Sigmoid colon (tissue), 7 donors: ENCODE measurements at regions of chr5 and their contacts with region 1.

Region 1: GRCh38 chr5:73298772-73299630 is 126.0 kb downstream of the TMEM174 start:
- DNase-seq: no peak
- H3K4me3 ChIP-seq: peak overlapping the region in 2 of 4 donors; percentile 1 to 9
- H3K27ac ChIP-seq: no peak overlapping the region
- H3K4me1 ChIP-seq: peaks cover 0 to 41% (median 33%) of the 10 kb centered on the region in 4 donors
- H3K27me3 ChIP-seq: peaks cover 67 to 92% (median 73%) of the 10 kb centered on the region in 3 donors
- CTCF ChIP-seq: no peak
- EP300 ChIP-seq: no peak
- POLR2A ChIP-seq: no peak

Region 2: GRCh38 chr5:73201547-73202513 is 97.2 kb before region 1 on chr5:
- intact Hi-C with region 1: no loop called
- DNase-seq: peak; percentile 71
- H3K4me3 ChIP-seq: no peak overlapping the region
- H3K27ac ChIP-seq: no peak overlapping the region
- H3K4me1 ChIP-seq: peaks cover 0 to 7% (median 5%) of the 10 kb centered on the region in 4 donors
- H3K27me3 ChIP-seq: peaks cover 0 to 33% (median 5%) of the 10 kb centered on the region in 3 donors
- CTCF ChIP-seq: peak in 2 of 4 experiments; percentile 45 to 68
- EP300 ChIP-seq: no peak
- POLR2A ChIP-seq: no peak

Region 3: DNA sequence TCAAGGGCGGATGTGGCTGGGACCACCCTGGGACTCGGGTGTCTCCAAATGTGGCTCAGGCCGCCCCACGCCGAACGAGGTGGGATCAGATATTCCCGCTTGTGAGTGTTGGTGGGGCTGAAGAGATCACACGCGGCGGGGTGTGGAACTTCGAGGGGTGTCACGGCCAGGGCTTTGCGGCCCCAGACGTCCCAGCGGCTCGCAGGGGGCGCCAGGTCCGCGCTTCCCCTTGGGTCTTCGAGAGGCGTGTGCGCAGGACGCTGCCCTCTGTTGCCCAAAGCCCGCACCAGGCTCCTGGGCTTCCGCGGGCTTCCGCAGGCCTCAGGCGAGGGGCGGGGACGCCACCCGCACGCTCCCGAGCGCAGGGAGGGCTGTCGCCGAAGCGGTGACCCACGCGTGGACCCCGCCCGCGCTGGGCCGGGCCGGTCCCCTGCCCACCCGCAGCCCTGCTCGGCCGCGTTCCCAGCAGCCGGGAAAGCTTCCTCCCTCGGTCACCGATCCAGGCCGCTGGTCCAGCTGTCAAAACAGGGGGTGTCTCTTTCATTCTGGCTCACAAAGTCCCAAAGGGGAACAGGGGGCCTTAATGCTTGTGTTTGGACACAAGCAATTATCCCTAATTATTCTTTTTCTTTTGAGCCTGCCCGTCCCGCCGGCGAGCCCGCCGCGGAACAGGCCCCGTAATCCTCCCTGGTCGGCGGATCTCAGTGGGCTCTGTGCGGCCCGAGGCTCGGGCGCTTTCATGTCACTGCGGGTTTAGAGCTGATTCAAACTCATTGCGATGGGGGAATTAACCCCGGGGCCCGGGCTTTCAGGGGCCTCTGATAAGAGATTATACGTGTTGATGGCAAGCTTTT is 65.4 kb before region 1 on chr5:
- intact Hi-C with region 1: loop called (anchors 5 kb)
- DNase-seq: no peak
- H3K4me3 ChIP-seq: peak overlapping the region; percentile 24 to 50 (median 38)
- H3K27ac ChIP-seq: no peak overlapping the region
- H3K4me1 ChIP-seq: peaks cover 0 to 25% (median 23%) of the 10 kb centered on the region in 4 donors
- H3K27me3 ChIP-seq: peaks cover 33 to 72% (median 48%) of the 10 kb centered on the region in 3 donors
- CTCF ChIP-seq: no peak
- EP300 ChIP-seq: no peak
- POLR2A ChIP-seq: no peak